Heart left ventricle (tissue), 16 donors: ENCODE measurements at regions of chr16 and their contacts with region 1.

Region 1: DNA sequence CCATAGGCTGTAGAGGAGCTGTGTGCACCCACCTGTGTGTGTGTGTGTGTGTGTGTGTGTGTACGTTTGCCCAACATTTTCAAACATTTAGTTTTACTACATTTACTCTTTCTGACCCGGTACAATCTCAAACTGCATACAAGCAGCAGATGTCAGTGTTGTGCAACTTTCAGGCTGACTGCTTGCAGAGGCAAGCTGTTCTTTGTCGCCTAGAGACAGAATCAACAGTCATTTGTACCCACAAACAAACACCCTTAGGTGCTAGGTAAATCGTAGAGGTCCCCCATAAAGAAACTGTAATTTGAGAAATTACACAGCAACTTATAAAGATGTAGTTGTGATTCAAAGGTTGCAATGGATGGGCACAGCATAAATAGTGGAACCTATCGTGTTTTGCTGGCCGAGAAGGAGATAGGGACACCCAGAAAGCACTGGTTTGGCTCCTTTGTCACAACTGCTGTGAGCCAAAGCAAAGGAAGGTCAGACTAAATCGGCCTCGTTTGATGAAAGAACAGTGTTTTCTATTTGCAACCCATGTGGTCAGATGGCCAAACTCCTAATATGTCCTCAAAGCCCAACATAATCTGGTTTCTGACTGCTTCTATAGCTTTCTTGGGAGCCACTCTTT is 478.4 kb downstream of the TOX3 start:
- DNase-seq: no peak
- ATAC-seq: peak in 3 of 4 donors; percentile 52 to 71 (median 57)
- H3K4me3 ChIP-seq: no peak overlapping the region
- H3K27ac ChIP-seq: no peak overlapping the region
- H3K4me1 ChIP-seq: peaks cover 0 to 5% (median 0%) of the 10 kb centered on the region in 12 donors
- H3K27me3 ChIP-seq: no peaks in the 10 kb centered on the region
- CTCF ChIP-seq: peak in 8 of 12 donors; percentile 13 to 46 (median 38)
- POLR2A ChIP-seq: no peak

Region 2: GRCh38 chr16:52141871-52142270 is 73.3 kb after region 1 on chr16:
- intact Hi-C with region 1: no loop called
- DNase-seq: no peak
- ATAC-seq: no peak
- H3K4me3 ChIP-seq: no peak overlapping the region
- H3K27ac ChIP-seq: peak overlapping the region in 1 of 12 donors; percentile 54
- H3K4me1 ChIP-seq: no peaks in the 10 kb centered on the region
- H3K27me3 ChIP-seq: no peaks in the 10 kb centered on the region
- CTCF ChIP-seq: no peak
- POLR2A ChIP-seq: no peak

Region 3: DNA sequence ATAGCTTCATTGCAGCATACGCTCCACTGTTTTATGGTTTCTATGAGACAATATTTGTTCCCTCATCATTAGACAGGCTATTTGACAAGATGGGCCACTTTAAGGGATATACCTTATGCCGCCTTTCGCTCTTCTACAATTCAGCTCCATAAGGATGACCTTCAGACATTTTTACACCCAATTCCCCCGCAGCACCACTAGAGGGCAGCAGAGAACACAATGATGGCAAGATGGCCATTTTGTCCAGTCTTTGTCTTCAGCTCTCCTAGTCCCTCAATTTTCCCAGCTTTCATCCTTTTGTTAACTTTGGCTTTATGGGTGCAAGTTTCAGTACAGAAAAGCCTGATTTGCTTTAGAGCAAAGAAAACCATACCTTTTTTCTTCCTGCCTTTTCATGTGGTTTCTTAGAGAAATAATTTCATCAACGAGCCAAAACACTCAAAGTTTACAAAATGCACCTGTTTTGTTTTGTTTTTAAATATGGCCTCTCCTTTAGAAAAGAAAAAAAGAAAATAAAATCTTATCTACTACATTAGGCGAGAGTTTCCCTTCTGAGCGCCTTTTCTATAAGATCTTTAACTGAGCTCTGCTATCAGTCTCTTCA is 123.1 kb after region 1 on chr16:
- intact Hi-C with region 1: loop called in 2 of 10 experiments (anchors 5 kb)
- DNase-seq: peak in 4 of 5 donors; percentile 23 to 61 (median 30)
- ATAC-seq: peak in 3 of 4 donors; percentile 39 to 57 (median 51)
- H3K4me3 ChIP-seq: no peak overlapping the region
- H3K27ac ChIP-seq: no peak overlapping the region
- H3K4me1 ChIP-seq: no peaks in the 10 kb centered on the region
- H3K27me3 ChIP-seq: peaks cover 0 to 6% (median 0%) of the 10 kb centered on the region in 9 donors
- CTCF ChIP-seq: peak; percentile 73 to 95 (median 88)
- POLR2A ChIP-seq: no peak

Region 4: DNA sequence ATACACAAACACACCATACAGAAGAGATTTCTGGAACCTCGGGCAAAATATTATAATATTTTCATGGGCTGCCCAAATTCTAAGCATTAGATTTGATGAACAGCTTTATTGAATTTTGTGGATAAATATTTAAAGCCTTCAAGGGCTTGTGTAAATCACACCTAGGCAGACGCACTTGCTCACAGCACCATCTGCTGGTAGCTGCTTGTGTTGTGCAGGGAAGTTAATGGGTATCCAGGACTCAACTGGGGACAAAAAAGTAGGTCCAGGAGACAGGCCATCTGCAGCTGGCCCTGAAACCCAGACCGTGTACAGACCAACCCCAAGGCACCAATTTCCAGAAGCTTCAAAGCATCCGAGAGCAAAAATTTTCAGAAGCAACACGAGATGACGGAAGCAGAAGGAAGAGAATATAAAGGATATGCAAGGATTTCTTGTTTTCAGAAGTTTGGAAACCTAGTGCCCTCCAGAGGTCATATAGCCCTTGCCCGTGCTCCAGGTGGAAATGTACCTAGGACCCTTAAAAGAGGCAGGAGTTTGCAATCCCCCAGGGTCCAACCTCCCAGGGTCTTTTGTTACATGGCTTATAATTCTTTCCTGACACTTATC is 844.1 kb after region 1 on chr16:
- intact Hi-C with region 1: loop called in 9 of 10 experiments (anchors 2 to 10 kb)
- DNase-seq: peak in 3 of 5 donors; percentile 29 to 43 (median 42)
- ATAC-seq: peak in 2 of 4 donors; percentile 59 to 61
- H3K4me3 ChIP-seq: no peak overlapping the region
- H3K27ac ChIP-seq: no peak overlapping the region
- H3K4me1 ChIP-seq: no peaks in the 10 kb centered on the region
- H3K27me3 ChIP-seq: no peaks in the 10 kb centered on the region
- CTCF ChIP-seq: peak; percentile 53 to 78 (median 69)
- POLR2A ChIP-seq: no peak

Region 5: DNA sequence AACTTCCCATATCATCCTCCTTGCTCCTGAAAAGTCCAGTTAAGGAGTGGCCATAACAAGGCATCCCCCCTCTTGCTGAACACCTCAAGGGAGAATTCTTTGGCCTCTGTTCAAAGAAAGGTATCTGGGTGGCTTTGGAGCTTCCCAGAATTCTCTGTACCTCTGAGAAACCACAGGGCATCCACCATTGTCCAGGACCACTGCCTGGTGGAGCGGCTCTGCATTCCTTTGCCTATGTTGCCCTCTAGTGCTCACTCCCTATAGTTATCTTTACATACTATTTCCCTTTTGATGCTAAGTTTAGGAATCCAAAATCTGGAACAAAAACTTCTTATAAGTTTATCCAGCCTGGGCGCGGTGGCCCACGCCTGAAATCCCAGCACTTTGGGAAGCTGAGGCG is 953.8 kb after region 1 on chr16:
- intact Hi-C with region 1: loop called in 6 of 10 experiments (anchors 5 kb)
- DNase-seq: peak in 2 of 5 donors; percentile 22 to 23
- ATAC-seq: peak; percentile 51 to 83 (median 77)
- H3K4me3 ChIP-seq: no peak overlapping the region
- H3K27ac ChIP-seq: no peak overlapping the region
- H3K4me1 ChIP-seq: no peaks in the 10 kb centered on the region
- H3K27me3 ChIP-seq: no peaks in the 10 kb centered on the region
- CTCF ChIP-seq: peak in 10 of 12 donors; percentile 36 to 65 (median 58)
- POLR2A ChIP-seq: no peak